ENCODE measurements at regions of chr2 and their contacts with region 1.

Region 1: GRCh38 chr2:60366135-60366712 is 187.2 kb downstream of the BCL11A start:
- DNase-seq: no peak
- ATAC-seq: peak; percentile 60
- H3K4me3 Mint-ChIP-seq: peak overlapping the region; percentile 62
- H3K27ac Mint-ChIP-seq: peak overlapping the region; percentile 95
- H3K4me1 Mint-ChIP-seq: peaks cover 99% of the 10 kb centered on the region
- H3K27me3 Mint-ChIP-seq: no peaks in the 10 kb centered on the region
- CTCF ChIP-seq: no peak

Region 2: GRCh38 chr2:59684116-59684770 is 682.0 kb before region 1 on chr2:
- CTCF ChIA-PET with region 1: no interaction called
- POLR2A ChIA-PET with region 1: no interaction called
- intact Hi-C with region 1: no loop called
- DNase-seq: no peak
- ATAC-seq: no peak
- H3K4me3 Mint-ChIP-seq: no peak overlapping the region
- H3K27ac Mint-ChIP-seq: no peak overlapping the region
- H3K4me1 Mint-ChIP-seq: no peaks in the 10 kb centered on the region
- H3K27me3 Mint-ChIP-seq: peaks cover 6% of the 10 kb centered on the region
- CTCF ChIP-seq: no peak

Region 3: DNA sequence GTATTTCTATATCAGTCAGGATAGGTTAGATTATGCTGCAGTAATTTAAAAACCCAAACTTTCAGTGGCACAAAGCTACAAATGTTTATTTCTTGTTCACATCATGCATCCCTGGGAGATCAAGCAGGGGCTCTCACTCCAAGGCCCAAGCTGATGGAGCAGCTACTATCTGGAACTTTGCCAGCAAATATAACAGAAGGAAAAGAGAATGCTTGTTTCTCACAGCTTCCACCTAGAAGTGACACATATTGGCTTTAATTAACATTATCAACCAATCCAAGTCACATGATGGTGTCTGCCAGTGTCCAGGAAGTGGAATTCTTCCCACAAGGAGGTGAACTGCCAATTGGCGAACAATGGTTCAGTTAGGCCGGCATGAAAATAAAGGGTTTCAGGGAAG is 119.6 kb before region 1 on chr2:
- CTCF ChIA-PET with region 1: no interaction called
- POLR2A ChIA-PET with region 1: no interaction called
- intact Hi-C with region 1: no loop called
- DNase-seq: no peak
- ATAC-seq: no peak
- H3K4me3 Mint-ChIP-seq: no peak overlapping the region
- H3K27ac Mint-ChIP-seq: no peak overlapping the region
- H3K4me1 Mint-ChIP-seq: no peaks in the 10 kb centered on the region
- H3K27me3 Mint-ChIP-seq: no peaks in the 10 kb centered on the region
- CTCF ChIP-seq: no peak

Region 4: DNA sequence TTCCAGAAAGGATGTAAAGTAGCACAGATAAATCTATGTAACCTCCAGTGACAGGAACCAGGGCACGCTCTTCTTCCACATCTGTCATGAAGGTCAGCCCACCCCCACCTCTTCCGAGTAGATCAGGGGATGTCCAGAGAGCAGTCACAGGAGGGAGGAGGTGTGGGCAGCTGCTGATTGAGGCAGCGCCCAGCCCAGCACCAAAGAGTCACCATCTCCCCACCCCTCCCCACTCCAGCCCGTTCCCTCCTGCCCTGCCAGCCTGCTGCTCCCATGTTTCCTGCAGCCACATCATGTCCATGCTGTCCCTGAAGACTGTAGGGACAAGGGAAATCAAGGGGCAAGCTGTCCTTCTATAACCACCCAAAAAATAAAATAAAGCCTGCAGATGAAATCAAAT is 82.6 kb before region 1 on chr2:
- CTCF ChIA-PET with region 1: no interaction called
- POLR2A ChIA-PET with region 1: no interaction called
- intact Hi-C with region 1: no loop called
- DNase-seq: no peak
- ATAC-seq: no peak
- H3K4me3 Mint-ChIP-seq: no peak overlapping the region
- H3K27ac Mint-ChIP-seq: no peak overlapping the region
- H3K4me1 Mint-ChIP-seq: peaks cover 4% of the 10 kb centered on the region
- H3K27me3 Mint-ChIP-seq: no peaks in the 10 kb centered on the region
- CTCF ChIP-seq: no peak

Region 5: GRCh38 chr2:60337140-60337494 is 29.1 kb before region 1 on chr2:
- CTCF ChIA-PET with region 1: interaction called, 3 read pairs
- POLR2A ChIA-PET with region 1: interaction called, 3 read pairs
- intact Hi-C with region 1: loop called (anchors 5 kb)
- DNase-seq: no peak
- ATAC-seq: peak; percentile 80
- H3K4me3 Mint-ChIP-seq: peak overlapping the region; percentile 32
- H3K27ac Mint-ChIP-seq: peak overlapping the region; percentile 95
- H3K4me1 Mint-ChIP-seq: peaks cover 65% of the 10 kb centered on the region
- H3K27me3 Mint-ChIP-seq: no peaks in the 10 kb centered on the region
- CTCF ChIP-seq: no peak

Region 6: GRCh38 chr2:60391649-60392375 is 25.6 kb after region 1 on chr2:
- CTCF ChIA-PET with region 1: interaction called, 3 read pairs
- POLR2A ChIA-PET with region 1: interaction called, 12 read pairs
- intact Hi-C with region 1: loop called (anchors 2 kb)
- DNase-seq: no peak
- ATAC-seq: peak; percentile 53
- H3K4me3 Mint-ChIP-seq: peak overlapping the region; percentile 53
- H3K27ac Mint-ChIP-seq: peak overlapping the region; percentile 76
- H3K4me1 Mint-ChIP-seq: peaks cover 57% of the 10 kb centered on the region
- H3K27me3 Mint-ChIP-seq: no peaks in the 10 kb centered on the region
- CTCF ChIP-seq: no peak

Region 7: GRCh38 chr2:60406192-60406591 is 40.0 kb after region 1 on chr2:
- CTCF ChIA-PET with region 1: no interaction called
- POLR2A ChIA-PET with region 1: interaction called, 13 read pairs
- intact Hi-C with region 1: loop called (anchors 5 kb)
- DNase-seq: no peak
- ATAC-seq: no peak
- H3K4me3 Mint-ChIP-seq: no peak overlapping the region
- H3K27ac Mint-ChIP-seq: peak overlapping the region; percentile 62
- H3K4me1 Mint-ChIP-seq: peaks cover 81% of the 10 kb centered on the region
- H3K27me3 Mint-ChIP-seq: no peaks in the 10 kb centered on the region
- CTCF ChIP-seq: no peak

Region 8: GRCh38 chr2:60413814-60414168 is 47.6 kb after region 1 on chr2:
- CTCF ChIA-PET with region 1: no interaction called
- POLR2A ChIA-PET with region 1: interaction called, 3 read pairs
- intact Hi-C with region 1: loop called (anchors 5 kb)
- DNase-seq: peak; percentile 41
- ATAC-seq: peak; percentile 72
- H3K4me3 Mint-ChIP-seq: peak overlapping the region; percentile 8
- H3K27ac Mint-ChIP-seq: peak overlapping the region; percentile 90
- H3K4me1 Mint-ChIP-seq: peaks cover 87% of the 10 kb centered on the region
- H3K27me3 Mint-ChIP-seq: no peaks in the 10 kb centered on the region
- CTCF ChIP-seq: no peak

Region 9: GRCh38 chr2:61204781-61205531 is 838.7 kb after region 1 on chr2:
- CTCF ChIA-PET with region 1: no interaction called
- POLR2A ChIA-PET with region 1: no interaction called
- intact Hi-C with region 1: no loop called
- DNase-seq: no peak
- ATAC-seq: no peak
- H3K4me3 Mint-ChIP-seq: no peak overlapping the region
- H3K27ac Mint-ChIP-seq: no peak overlapping the region
- H3K4me1 Mint-ChIP-seq: no peaks in the 10 kb centered on the region
- H3K27me3 Mint-ChIP-seq: no peaks in the 10 kb centered on the region
- CTCF ChIP-seq: no peak

Measured in activated B cell treated with CpG ODN at 0.5 μM for 24 hours (primary cell).